ENCODE measurements at regions of chr15 and their contacts with region 1.

Region 1: GRCh38 chr15:40081691-40082194 is 26.9 kb downstream of the BMF start:
- DNase-seq: peak in 1 of 2 experiments; percentile 41
- H3K4me3 ChIP-seq: peak overlapping the region; percentile 44; the same call in 1 of the 2 replicates
- H3K27ac ChIP-seq: no peak overlapping the region
- H3K4me1 ChIP-seq: peaks cover 34% of the 10 kb centered on the region
- H3K27me3 ChIP-seq: no peaks in the 10 kb centered on the region
- CTCF ChIP-seq: no peak

Region 2: GRCh38 chr15:39934397-39935071 is 147.2 kb before region 1 on chr15:
- CTCF ChIA-PET with region 1: interaction called, 14 read pairs
- POLR2A ChIA-PET with region 1: no interaction called
- intact Hi-C with region 1: no loop called
- DNase-seq: peak in 1 of 2 experiments; percentile 8
- H3K4me3 ChIP-seq: peak overlapping the region; percentile 93
- H3K27ac ChIP-seq: peak overlapping the region; percentile 88
- H3K4me1 ChIP-seq: peaks cover 23% of the 10 kb centered on the region
- H3K27me3 ChIP-seq: no peaks in the 10 kb centered on the region
- CTCF ChIP-seq: no peak

Region 3: GRCh38 chr15:39961051-39961450 is 120.7 kb before region 1 on chr15:
- CTCF ChIA-PET with region 1: no interaction called
- POLR2A ChIA-PET with region 1: no interaction called
- intact Hi-C with region 1: no loop called
- DNase-seq: no peak
- H3K4me3 ChIP-seq: no peak overlapping the region
- H3K27ac ChIP-seq: no peak overlapping the region
- H3K4me1 ChIP-seq: no peaks in the 10 kb centered on the region
- H3K27me3 ChIP-seq: no peaks in the 10 kb centered on the region
- CTCF ChIP-seq: no peak

Region 4: DNA sequence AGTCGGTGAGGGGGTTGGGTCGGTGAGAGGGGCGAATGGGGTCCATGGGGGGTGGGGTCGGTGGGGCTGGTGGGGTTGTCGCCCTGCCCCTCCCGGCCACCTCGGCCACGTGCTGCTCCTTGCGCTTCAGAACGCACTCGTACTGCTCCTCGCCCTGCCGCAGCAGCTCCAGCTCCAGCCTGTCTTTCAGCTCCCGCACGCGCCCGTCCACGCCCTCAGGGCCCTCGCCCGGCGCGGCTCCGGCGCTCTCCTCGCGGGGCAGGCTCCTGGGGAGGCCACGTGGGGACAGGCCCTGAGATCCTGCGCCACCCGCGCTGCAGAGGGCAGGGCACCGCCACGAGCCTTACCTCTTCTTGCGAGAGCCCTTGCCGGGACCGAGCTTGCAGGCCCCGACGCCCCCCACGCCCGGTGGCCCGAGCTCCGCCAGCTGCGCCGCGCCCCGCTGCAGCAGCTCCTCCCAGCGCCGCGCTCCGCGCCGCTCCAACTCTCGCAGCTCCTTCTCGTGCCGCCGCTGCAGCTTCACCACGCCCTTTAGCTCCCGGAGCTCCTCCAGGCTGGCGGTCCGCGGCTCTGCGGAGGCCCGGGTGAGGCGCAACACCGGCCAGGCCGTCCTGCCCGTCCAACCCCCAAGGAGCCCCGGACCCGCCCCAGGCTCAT is 209.3 kb after region 1 on chr15:
- CTCF ChIA-PET with region 1: no interaction called
- POLR2A ChIA-PET with region 1: interaction called, 14 read pairs
- intact Hi-C with region 1: no loop called
- DNase-seq: peak; percentile 54 to 59
- H3K4me3 ChIP-seq: peak overlapping the region; percentile 54; the same call in 1 of the 2 replicates
- H3K27ac ChIP-seq: no peak overlapping the region
- H3K4me1 ChIP-seq: no peaks in the 10 kb centered on the region
- H3K27me3 ChIP-seq: no peaks in the 10 kb centered on the region
- CTCF ChIP-seq: no peak